Endothelial cell of umbilical vein (primary cell): ENCODE measurements at regions of chr6 and their contacts with region 1.

Region 1: DNA sequence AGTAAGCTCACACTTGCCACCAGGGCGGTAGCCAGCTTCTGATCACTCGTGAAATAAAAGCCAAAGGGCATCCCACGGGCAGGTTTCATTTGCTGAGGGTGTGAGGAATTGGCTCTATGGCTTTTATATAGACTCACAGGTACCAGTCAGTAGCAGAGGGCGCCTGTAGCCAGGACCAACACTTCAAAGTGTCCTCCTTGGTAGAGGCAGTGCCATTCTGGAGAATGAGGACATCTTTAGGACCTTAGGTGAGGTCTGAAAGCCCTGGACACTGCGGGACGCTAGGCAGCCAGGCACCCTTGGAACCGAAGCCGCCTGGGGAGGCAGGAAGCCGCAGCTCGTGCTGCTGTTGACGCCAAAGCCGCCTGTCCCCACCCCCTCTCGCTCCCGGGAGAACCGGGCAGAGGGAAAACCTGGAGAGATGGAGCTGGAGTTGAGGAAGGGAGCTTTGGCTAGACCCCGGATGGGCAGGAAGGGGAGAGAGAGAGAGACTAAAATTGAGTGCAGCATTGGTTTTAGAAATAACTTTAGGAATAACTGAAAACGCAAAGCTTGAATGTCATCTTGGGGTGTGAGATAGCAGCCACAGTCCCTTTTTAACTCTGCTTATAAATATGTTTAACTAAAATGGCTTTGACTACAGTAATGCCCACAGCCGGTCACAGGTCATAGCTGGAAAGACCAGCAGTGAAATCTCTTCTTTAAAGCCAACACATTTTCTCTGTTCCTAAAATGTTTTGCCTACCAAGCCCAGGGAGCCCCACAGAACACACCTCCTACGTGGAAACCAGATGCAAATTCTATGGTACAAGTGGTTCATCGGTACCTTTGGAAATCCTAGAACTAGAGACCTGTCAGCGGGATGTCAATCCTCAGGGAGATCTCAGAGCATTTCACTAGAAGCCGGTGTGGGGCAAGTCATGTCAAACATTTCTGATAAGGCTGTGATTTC is 128.5 kb upstream of the CDYL start:
- DNase-seq: peak; percentile 77
- H3K4me3 ChIP-seq: peak overlapping the region in 1 of 3 experiments; percentile 25
- H3K27ac ChIP-seq: no peak overlapping the region
- H3K4me1 ChIP-seq: peaks cover 14% of the 10 kb centered on the region
- H3K27me3 ChIP-seq: no peaks in the 10 kb centered on the region
- CTCF ChIP-seq: no peak
- POLR2A ChIP-seq: no peak

Region 2: DNA sequence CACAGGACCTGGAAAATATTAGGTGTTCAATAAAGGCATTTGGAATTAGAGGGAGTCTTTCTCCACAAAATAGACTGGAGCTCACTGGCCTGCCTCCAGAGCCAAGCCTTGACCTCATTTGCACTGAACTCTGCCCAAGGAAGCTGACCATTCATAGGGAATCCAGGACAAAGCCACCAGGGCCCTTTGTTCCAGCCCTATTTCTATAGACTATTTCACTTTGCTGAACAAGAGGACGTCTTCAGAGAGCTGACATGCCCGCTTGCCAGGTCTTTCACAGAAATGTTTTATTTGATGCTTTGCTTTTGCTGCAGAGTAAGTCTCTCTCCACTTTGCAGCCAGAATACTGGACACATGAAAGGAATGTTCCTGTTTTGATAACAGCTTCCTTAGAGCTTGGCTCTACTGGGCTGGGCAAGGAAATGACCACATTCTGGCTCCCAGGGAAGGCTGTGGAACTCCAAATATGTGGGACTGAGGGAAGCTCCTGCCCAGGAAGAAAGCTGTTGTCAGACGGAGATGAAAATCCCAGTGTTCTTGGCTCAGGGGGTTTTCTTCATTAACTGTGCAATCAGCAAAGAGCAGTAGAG is 65.8 kb before region 1 on chr6:
- CTCF ChIA-PET with region 1: no interaction called
- POLR2A ChIA-PET with region 1: no interaction called
- dilution Hi-C with region 1: no loop called
- intact Hi-C with region 1: loop called (anchors 1 kb)
- DNase-seq: peak; percentile 76
- H3K4me3 ChIP-seq: no peak overlapping the region
- H3K27ac ChIP-seq: peak overlapping the region; percentile 81
- H3K4me1 ChIP-seq: peaks cover 22% of the 10 kb centered on the region
- H3K27me3 ChIP-seq: no peaks in the 10 kb centered on the region
- CTCF ChIP-seq: no peak
- POLR2A ChIP-seq: no peak

Region 3: GRCh38 chr6:4687989-4688947 is 40.6 kb after region 1 on chr6:
- CTCF ChIA-PET with region 1: no interaction called
- POLR2A ChIA-PET with region 1: no interaction called
- dilution Hi-C with region 1: no loop called
- intact Hi-C with region 1: loop called (anchors 2 kb)
- DNase-seq: peak; percentile 87
- H3K4me3 ChIP-seq: peak overlapping the region in 1 of 3 experiments; percentile 54
- H3K27ac ChIP-seq: peak overlapping the region; percentile 80
- H3K4me1 ChIP-seq: peaks cover 11% of the 10 kb centered on the region
- H3K27me3 ChIP-seq: peaks cover 4% of the 10 kb centered on the region in 2 experiments
- CTCF ChIP-seq: no peak
- POLR2A ChIP-seq: no peak

Region 4: GRCh38 chr6:4732691-4733315 is 85.1 kb after region 1 on chr6:
- CTCF ChIA-PET with region 1: no interaction called
- POLR2A ChIA-PET with region 1: no interaction called
- dilution Hi-C with region 1: no loop called
- intact Hi-C with region 1: loop called (anchors 5 kb)
- DNase-seq: peak; percentile 85
- H3K4me3 ChIP-seq: peak overlapping the region in 1 of 3 experiments; percentile 1
- H3K27ac ChIP-seq: no peak overlapping the region
- H3K4me1 ChIP-seq: peaks cover 11% of the 10 kb centered on the region
- H3K27me3 ChIP-seq: peaks cover 5 to 8% of the 10 kb centered on the region in 2 experiments
- CTCF ChIP-seq: no peak
- POLR2A ChIP-seq: no peak